ENCODE measurements at regions of chr6 and their contacts with region 1.

Region 1: DNA sequence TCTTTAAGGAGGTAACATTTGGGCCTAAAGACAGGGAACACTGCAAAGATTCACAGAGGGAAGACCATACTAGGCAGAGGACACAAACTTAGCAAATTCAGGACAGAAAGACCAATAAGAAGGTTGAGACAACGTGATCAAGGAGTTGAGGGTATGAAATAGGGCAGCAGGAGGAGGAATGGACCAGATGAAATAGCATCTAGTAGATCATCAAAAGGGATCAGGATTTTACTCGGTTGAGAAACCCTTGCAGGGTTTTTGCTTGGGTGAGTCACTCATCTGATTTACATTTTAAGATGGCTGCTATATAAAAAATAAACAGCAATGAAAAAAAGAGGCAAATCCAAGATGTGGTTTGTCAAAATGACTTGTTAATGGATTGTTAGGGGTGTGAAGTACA is 4.7 kb downstream of the BCLAF1 start:
- DNase-seq: no peak
- H3K4me3 ChIP-seq: no peak overlapping the region
- CTCF ChIP-seq: no peak

Region 2: DNA sequence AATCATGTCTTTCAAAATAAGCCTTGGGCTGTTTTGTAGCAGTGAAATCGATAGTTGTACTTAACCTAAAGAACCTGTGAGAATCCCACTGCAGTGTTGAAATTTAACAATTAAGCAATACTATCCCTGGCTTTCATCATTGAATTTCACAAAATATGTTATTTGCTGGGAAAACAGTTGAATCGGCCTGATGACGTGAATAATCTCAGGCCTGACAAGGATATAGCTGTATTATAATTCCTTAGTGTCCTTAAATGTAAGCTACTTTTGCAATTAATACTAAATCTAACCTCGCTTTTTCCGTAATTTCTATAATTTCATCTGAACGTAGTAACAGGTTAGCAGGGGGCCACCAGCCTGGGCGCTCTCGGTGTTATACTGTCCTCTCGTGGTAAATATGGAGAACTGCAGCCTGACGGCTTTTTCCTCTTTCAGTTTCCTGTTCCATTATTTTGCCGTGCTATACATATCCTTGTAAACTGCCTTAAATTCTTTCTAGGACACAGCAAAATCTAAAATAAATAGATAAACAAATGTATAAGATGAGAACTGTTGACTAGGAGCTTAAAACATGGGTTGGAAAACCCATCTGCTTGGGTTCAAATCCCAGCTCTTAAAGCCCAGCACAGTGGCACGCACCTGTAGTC is 58.8 kb before region 1 on chr6:
- in situ Hi-C with region 1: no loop called
- DNase-seq: peak; percentile 53
- H3K4me3 ChIP-seq: no peak overlapping the region
- CTCF ChIP-seq: peak; percentile 100

Region 3: DNA sequence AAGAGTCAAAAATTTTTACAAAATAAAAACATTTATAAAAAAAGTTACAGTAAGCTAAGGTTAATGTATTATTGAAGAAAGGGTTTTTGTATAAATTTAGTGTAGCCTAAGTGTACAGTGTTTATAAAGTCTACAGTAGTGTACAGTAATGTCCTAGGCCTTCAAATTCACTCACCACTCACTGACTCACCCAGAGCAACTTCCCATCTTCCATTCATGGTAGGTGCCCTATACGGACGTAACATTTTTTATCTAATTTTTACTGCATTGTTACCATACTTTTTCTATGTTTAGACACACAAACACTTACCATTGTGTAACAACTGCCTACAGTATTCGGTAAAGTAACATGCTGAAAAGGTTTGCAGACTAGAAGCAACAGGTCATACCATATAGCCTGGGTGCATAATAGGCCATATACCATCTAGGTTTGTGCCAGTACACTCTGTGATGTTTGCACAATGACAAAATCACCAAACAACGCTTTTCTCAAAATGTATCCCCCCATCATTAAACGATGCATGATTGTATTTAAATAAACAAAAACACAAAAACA is 40.8 kb before region 1 on chr6:
- in situ Hi-C with region 1: loop called (anchors 5 kb)
- DNase-seq: no peak
- H3K4me3 ChIP-seq: no peak overlapping the region
- CTCF ChIP-seq: no peak

Region 4: GRCh38 chr6:136326038-136326553 is 41.2 kb after region 1 on chr6:
- in situ Hi-C with region 1: no loop called
- DNase-seq: no peak
- H3K4me3 ChIP-seq: no peak overlapping the region
- CTCF ChIP-seq: no peak